ENCODE measurements at regions of chr5 and their contacts with region 1.

Region 1: GRCh38 chr5:67003935-67004729 is 192.5 kb downstream of the CD180 start:
- DNase-seq: peak; percentile 99
- H3K4me3 ChIP-seq: peak overlapping the region; percentile 52 to 93 (median 87)
- H3K27ac ChIP-seq: peak overlapping the region; percentile 94
- H3K4me1 ChIP-seq: peaks cover 37% of the 10 kb centered on the region
- H3K27me3 ChIP-seq: no peaks in the 10 kb centered on the region
- CTCF ChIP-seq: no peak
- POLR2A ChIP-seq: peak; percentile 95

Region 2: GRCh38 chr5:66828548-66829357 is 175.4 kb before region 1 on chr5:
- CTCF ChIA-PET with region 1: interaction called, 5 read pairs
- POLR2A ChIA-PET with region 1: no interaction called
- dilution Hi-C with region 1: no loop called
- intact Hi-C with region 1: loop called (anchors 1 kb)
- DNase-seq: peak; percentile 92
- H3K4me3 ChIP-seq: peak overlapping the region; percentile 54 to 70 (median 55)
- H3K27ac ChIP-seq: peak overlapping the region; percentile 91
- H3K4me1 ChIP-seq: peaks cover 22% of the 10 kb centered on the region
- H3K27me3 ChIP-seq: no peaks in the 10 kb centered on the region
- CTCF ChIP-seq: no peak
- POLR2A ChIP-seq: peak; percentile 95

Region 3: GRCh38 chr5:66877843-66878242 is 126.3 kb before region 1 on chr5:
- CTCF ChIA-PET with region 1: no interaction called
- POLR2A ChIA-PET with region 1: no interaction called
- dilution Hi-C with region 1: no loop called
- intact Hi-C with region 1: no loop called
- DNase-seq: peak; percentile 68
- H3K4me3 ChIP-seq: no peak overlapping the region
- H3K27ac ChIP-seq: no peak overlapping the region
- H3K4me1 ChIP-seq: peaks cover 31% of the 10 kb centered on the region
- H3K27me3 ChIP-seq: no peaks in the 10 kb centered on the region
- CTCF ChIP-seq: no peak
- POLR2A ChIP-seq: no peak

Region 4: DNA sequence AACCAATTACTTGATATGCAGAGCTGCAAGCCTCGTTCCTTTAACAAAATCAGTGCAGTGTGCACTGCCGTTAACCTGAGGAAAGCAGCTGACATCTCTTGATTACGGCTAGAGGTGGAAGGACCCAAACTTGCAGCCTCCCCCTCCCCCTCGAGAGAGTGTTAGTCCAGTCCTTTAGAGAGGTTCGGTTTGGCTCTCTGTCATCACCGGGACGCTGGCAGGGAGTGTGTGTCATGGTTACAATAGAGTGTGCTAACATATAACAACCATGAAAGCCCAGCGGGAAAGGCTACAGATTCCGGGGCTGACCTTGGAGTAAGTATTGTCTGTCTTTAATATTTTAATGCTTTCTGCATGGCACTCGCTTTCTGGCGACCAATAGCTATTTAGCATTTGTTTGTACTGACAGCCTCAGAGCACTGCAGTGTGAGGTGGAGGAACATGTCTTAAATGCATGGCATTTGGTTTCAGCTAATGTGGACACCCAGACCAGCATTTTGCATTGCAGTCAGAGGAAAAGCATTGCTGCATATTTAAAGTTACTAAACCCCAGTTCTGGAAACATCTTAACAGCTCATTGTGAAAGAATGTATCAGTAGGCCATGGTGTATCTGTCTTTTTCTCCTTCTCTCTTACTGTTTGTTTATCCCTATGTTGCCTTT is 45.0 kb before region 1 on chr5:
- CTCF ChIA-PET with region 1: interaction called, 4 read pairs
- POLR2A ChIA-PET with region 1: no interaction called
- dilution Hi-C with region 1: no loop called
- intact Hi-C with region 1: loop called (anchors 1 kb)
- DNase-seq: peak; percentile 20
- H3K4me3 ChIP-seq: no peak overlapping the region
- H3K27ac ChIP-seq: peak overlapping the region; percentile 80
- H3K4me1 ChIP-seq: peaks cover 24% of the 10 kb centered on the region
- H3K27me3 ChIP-seq: no peaks in the 10 kb centered on the region
- CTCF ChIP-seq: no peak
- POLR2A ChIP-seq: no peak

Region 5: DNA sequence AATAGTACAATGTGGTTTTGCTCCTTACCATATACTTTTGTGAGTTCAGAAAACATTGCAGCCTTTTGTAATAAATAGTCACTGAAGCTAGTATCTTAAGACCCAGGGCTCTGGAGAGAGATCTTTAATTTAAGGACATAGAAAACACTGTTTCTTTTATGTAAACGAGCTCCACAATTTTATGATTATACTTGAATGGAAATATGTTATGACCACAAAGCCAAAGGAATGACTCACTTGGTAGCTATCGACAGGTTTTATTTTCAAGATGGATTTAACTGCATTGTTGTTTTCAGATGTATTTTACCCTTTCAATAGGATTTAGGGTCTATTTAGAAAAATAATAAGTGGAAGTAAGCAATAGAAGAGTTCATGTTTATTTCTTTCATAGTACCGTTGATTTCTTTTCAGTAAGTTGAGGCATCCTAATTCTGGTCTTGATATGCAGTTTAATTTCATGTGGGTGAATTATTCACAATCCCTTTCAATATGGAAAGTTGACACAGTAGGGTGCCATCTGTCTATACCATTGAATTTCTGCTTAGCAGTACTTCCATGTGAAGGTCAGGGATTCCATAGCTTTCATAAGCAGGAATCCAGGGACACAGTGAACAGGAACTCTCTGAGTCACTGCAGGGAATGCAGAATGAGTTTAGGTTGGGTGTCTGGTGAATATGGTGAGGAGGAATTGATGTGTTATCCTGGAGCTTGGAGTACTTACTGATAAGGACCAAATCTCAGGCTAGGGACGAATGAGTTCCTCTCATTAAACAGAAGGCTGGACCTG is 34.9 kb after region 1 on chr5:
- CTCF ChIA-PET with region 1: interaction called, 5 read pairs
- POLR2A ChIA-PET with region 1: no interaction called
- dilution Hi-C with region 1: no loop called
- intact Hi-C with region 1: loop called (anchors 1 kb)
- DNase-seq: peak; percentile 85
- H3K4me3 ChIP-seq: no peak overlapping the region
- H3K27ac ChIP-seq: peak overlapping the region; percentile 65
- H3K4me1 ChIP-seq: peaks cover 46% of the 10 kb centered on the region
- H3K27me3 ChIP-seq: no peaks in the 10 kb centered on the region
- CTCF ChIP-seq: no peak
- POLR2A ChIP-seq: no peak

Region 6: GRCh38 chr5:67065237-67065636 is 61.1 kb after region 1 on chr5:
- CTCF ChIA-PET with region 1: interaction called, 3 read pairs
- POLR2A ChIA-PET with region 1: no interaction called
- dilution Hi-C with region 1: no loop called
- intact Hi-C with region 1: loop called (anchors 1 kb)
- DNase-seq: no peak
- H3K4me3 ChIP-seq: no peak overlapping the region
- H3K27ac ChIP-seq: no peak overlapping the region
- H3K4me1 ChIP-seq: peaks cover 45% of the 10 kb centered on the region
- H3K27me3 ChIP-seq: no peaks in the 10 kb centered on the region
- CTCF ChIP-seq: no peak
- POLR2A ChIP-seq: no peak

Region 7: GRCh38 chr5:67081261-67081660 is 77.1 kb after region 1 on chr5:
- CTCF ChIA-PET with region 1: no interaction called
- POLR2A ChIA-PET with region 1: no interaction called
- dilution Hi-C with region 1: no loop called
- intact Hi-C with region 1: loop called (anchors 5 kb)
- DNase-seq: no peak
- H3K4me3 ChIP-seq: no peak overlapping the region
- H3K27ac ChIP-seq: no peak overlapping the region
- H3K4me1 ChIP-seq: peaks cover 21% of the 10 kb centered on the region
- H3K27me3 ChIP-seq: no peaks in the 10 kb centered on the region
- CTCF ChIP-seq: no peak
- POLR2A ChIP-seq: no peak

Region 8: DNA sequence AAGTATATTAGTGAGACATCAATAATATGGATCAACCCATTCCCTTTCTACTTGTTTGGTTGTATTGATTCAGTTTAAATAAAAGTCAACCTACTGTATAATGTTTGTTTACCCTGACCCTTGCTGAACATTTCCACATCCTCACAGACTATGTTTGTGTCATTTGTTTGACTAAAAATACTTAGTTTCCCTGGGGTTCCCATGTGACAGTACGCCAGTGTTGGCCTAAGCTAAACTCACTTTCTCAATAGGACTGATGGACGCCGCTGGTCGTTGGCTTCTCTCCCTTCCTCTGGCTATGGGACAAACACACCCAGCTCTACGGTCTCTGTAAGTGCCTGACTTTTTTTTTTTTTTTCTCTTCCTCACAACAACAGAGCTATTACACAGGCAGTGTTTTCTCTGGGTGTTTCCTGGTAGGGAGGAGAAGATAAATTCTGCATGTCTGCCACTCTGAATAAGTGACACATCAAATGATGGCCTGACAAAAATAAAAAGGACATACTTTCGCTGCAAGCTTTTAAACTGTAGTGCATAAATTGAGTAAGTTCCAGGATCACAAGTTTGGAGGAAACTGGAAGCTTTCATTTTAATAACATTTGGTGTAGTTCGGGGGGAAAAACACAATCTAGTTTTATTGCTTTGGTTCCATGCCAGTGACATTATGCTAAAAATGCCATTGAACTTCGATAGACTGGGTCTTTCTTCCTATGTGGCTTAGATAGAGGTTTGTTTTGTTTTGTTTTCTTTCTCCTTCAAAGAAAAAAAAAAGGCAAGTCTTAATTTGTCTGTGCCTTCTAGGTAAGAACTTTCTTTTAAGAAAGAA is 91.4 kb after region 1 on chr5:
- CTCF ChIA-PET with region 1: interaction called, 3 read pairs
- POLR2A ChIA-PET with region 1: no interaction called
- dilution Hi-C with region 1: no loop called
- intact Hi-C with region 1: loop called (anchors 2 kb)
- DNase-seq: peak; percentile 78
- H3K4me3 ChIP-seq: no peak overlapping the region
- H3K27ac ChIP-seq: no peak overlapping the region
- H3K4me1 ChIP-seq: peaks cover 17% of the 10 kb centered on the region
- H3K27me3 ChIP-seq: no peaks in the 10 kb centered on the region
- CTCF ChIP-seq: no peak
- POLR2A ChIP-seq: no peak